Mammary epithelial cell (primary cell): ENCODE measurements at regions of chr3 and their contacts with region 1.

Region 1: DNA sequence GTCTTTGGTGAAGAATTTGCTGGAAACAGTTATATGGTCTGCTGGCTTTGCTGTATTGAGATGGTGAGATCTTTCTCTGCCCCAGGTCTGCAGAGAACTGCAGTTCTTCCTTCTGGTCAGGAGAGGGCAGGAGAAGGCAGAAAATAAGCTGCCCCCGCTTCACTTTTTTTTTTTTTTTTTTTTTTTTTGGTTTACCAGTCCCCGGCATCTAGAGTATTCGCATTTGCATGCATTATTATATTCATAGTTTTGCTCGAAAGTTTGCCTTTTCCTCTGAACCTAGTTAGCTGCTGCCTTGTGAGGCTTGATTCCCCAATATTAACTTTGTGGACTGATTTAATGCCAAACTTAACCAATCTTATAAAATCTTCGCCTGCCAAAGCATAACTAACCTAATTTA is 10.6 kb upstream of the PARL start:
- DNase-seq: peak; percentile 32
- H3K4me3 ChIP-seq: no peak overlapping the region
- H3K27ac ChIP-seq: no peak overlapping the region
- H3K4me1 ChIP-seq: no peaks in the 10 kb centered on the region
- H3K27me3 ChIP-seq: no peaks in the 10 kb centered on the region
- CTCF ChIP-seq: peak; percentile 83 to 92

Region 2: GRCh38 chr3:183328823-183329222 is 566.5 kb before region 1 on chr3:
- CTCF ChIA-PET with region 1: no interaction called
- dilution Hi-C with region 1: no loop called
- in situ Hi-C with region 1: no loop called
- intact Hi-C with region 1: no loop called
- DNase-seq: peak; percentile 76
- H3K4me3 ChIP-seq: no peak overlapping the region
- H3K27ac ChIP-seq: no peak overlapping the region
- H3K4me1 ChIP-seq: peaks cover 19% of the 10 kb centered on the region
- H3K27me3 ChIP-seq: no peaks in the 10 kb centered on the region
- CTCF ChIP-seq: no peak

Region 3: GRCh38 chr3:183912895-183913579 is 17.7 kb after region 1 on chr3:
- CTCF ChIA-PET with region 1: no interaction called
- dilution Hi-C with region 1: no loop called
- in situ Hi-C with region 1: no loop called
- intact Hi-C with region 1: no loop called
- DNase-seq: no peak
- H3K4me3 ChIP-seq: no peak overlapping the region
- H3K27ac ChIP-seq: no peak overlapping the region
- H3K4me1 ChIP-seq: peaks cover 5% of the 10 kb centered on the region
- H3K27me3 ChIP-seq: no peaks in the 10 kb centered on the region
- CTCF ChIP-seq: no peak

Region 4: GRCh38 chr3:183944775-183945174 is 49.5 kb after region 1 on chr3:
- CTCF ChIA-PET with region 1: no interaction called
- dilution Hi-C with region 1: loop called (anchors 5 kb)
- in situ Hi-C with region 1: no loop called
- intact Hi-C with region 1: no loop called
- DNase-seq: no peak
- H3K4me3 ChIP-seq: no peak overlapping the region
- H3K27ac ChIP-seq: no peak overlapping the region
- H3K4me1 ChIP-seq: no peaks in the 10 kb centered on the region
- H3K27me3 ChIP-seq: no peaks in the 10 kb centered on the region
- CTCF ChIP-seq: no peak

Region 5: GRCh38 chr3:184017672-184018423 is 122.6 kb after region 1 on chr3 and contains the start of gene ABCC5:
- CTCF ChIA-PET with region 1: interaction called, 6 read pairs
- dilution Hi-C with region 1: no loop called
- in situ Hi-C with region 1: loop called (anchors 5 to 10 kb)
- intact Hi-C with region 1: loop called (anchors 2 kb)
- DNase-seq: peak; percentile 87
- H3K4me3 ChIP-seq: peak within 1 kb of the TSS; percentile 97 to 100 (median 100)
- H3K27ac ChIP-seq: peak within 1 kb of the TSS; percentile 35
- H3K4me1 ChIP-seq: peaks cover 17% of the 10 kb centered on the region
- H3K27me3 ChIP-seq: no peaks in the 10 kb centered on the region
- CTCF ChIP-seq: no peak
- total RNA-seq, gene ABCC5: 17.3 to 24.1 TPM

Region 6: GRCh38 chr3:184145111-184145524 is 249.8 kb after region 1 on chr3:
- CTCF ChIA-PET with region 1: no interaction called
- dilution Hi-C with region 1: no loop called
- in situ Hi-C with region 1: no loop called
- intact Hi-C with region 1: loop called (anchors 2 kb)
- DNase-seq: peak; percentile 67
- H3K4me3 ChIP-seq: no peak overlapping the region
- H3K27ac ChIP-seq: no peak overlapping the region
- H3K4me1 ChIP-seq: no peaks in the 10 kb centered on the region
- H3K27me3 ChIP-seq: no peaks in the 10 kb centered on the region
- CTCF ChIP-seq: peak; percentile 74 to 80

Region 7: DNA sequence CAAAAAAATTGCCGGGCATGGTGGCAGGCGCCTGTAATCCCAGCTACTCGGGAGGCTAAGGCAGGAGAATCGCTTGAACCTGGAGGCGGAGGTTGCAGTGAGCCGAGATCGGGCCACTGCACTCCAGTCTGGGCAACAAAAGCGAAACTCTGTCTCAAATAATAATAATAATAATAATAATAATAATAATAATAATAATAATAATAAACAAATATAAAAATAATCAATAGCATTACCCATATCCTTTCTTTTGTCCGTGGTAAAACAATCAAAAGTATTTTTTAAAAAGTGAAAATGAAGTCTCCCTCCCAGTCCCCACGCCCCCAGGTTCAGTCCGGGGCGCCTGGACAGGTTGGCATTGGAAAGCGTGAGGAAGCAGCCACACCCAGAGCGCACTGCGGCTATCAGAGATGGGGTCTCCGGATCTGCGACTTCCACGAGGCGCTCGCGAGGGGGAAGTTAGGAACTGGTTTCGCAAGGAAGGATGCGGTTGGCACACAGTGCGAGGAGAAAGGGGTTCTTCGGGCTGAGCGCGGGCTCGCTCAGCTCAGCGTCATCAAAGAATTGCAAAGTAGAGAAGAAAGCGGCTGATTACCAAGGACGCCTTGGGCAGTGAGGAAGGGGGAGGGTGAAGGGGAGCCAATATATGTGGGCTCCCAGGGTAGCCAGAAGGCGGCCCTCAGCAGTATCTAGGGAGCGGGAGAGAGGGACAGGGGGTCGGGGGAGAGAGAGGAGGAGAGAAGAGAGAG is 596.7 kb after region 1 on chr3:
- CTCF ChIA-PET with region 1: no interaction called
- dilution Hi-C with region 1: loop called (anchors 10 kb)
- in situ Hi-C with region 1: no loop called
- intact Hi-C with region 1: no loop called
- DNase-seq: no peak
- H3K4me3 ChIP-seq: peak overlapping the region; percentile 26 to 36 (median 28)
- H3K27ac ChIP-seq: no peak overlapping the region
- H3K4me1 ChIP-seq: peaks cover 3% of the 10 kb centered on the region
- H3K27me3 ChIP-seq: peaks cover 27% of the 10 kb centered on the region
- CTCF ChIP-seq: no peak